Kidney (tissue), 22 donors: ENCODE measurements at regions of chr11 and their contacts with region 1.

Region 1: DNA sequence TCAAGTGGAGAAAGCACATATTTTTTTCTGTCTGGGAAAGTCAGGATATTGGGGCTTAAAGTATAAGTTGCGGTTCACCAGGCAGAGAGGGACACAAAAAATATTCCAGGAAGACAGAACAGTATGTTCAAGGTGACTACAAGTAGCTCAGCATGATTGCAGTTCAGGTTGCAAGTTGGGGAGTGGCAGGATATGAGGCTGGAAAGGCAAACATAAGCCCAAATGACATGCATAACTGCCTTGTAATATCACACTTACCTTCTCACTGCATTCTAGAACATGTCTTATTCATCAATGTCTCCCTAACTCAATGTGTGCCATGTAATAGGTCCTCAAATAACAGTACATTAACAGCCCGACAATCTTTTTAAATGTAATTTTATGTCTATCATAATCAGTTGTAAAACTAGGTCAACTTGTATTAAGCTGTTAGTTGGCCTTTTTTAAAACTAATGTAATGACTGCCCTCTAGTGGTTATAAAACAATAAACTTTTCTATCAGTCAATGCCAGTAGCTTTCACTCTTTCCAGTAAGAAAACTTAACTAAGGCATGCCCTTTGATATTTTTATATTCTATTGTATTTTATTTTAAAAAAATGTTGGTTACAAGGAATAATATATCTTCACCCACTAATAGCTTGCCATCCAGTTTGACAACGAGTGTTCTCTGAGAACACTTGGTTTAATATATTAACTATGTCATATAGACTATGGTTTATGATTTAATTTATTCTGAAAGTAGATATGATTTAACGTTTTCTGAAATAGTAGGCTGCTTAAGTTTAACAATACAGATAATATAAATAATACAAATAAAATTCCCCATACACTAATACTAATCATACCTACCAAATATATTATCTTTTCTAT is 39.4 kb upstream of the CFAP300 start:
- DNase-seq: peak in 3 of 5 donors; percentile 22 to 75 (median 66)
- H3K4me3 ChIP-seq: no peak overlapping the region
- H3K27ac ChIP-seq: no peak overlapping the region
- H3K4me1 ChIP-seq: peaks cover 0 to 4% (median 0%) of the 10 kb centered on the region in 3 donors
- H3K27me3 ChIP-seq: no peaks in the 10 kb centered on the region
- CTCF ChIP-seq: peak; percentile 46

Region 2: DNA sequence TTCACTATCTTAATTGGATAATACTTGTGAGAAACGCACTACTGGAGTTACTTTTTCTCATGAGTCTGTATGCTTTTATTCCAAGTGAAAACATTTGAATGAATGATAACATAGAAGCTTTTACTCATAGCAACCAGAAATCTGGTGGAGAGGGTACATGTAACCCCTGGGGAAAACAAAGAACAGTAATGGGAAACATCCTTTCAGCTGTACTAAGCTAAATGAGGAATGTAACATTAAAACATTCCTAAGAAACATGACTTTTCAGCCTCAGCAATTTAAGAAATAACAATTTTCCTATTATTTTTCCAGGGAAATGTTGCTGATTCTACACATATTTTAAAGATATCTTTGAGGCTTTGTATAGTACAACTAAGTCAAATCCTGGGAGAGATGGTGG is 190.2 kb before region 1 on chr11:
- intact Hi-C with region 1: no loop called
- DNase-seq: no peak
- H3K4me3 ChIP-seq: no peak overlapping the region
- H3K27ac ChIP-seq: peak overlapping the region in 1 of 2 donors; percentile 23
- H3K4me1 ChIP-seq: no peaks in the 10 kb centered on the region
- H3K27me3 ChIP-seq: no peaks in the 10 kb centered on the region
- CTCF ChIP-seq: no peak

Region 3: GRCh38 chr11:101860696-101861427 is 146.9 kb before region 1 on chr11:
- intact Hi-C with region 1: loop called (anchors 10 kb)
- DNase-seq: peak; percentile 19 to 62 (median 53)
- H3K4me3 ChIP-seq: no peak overlapping the region
- H3K27ac ChIP-seq: no peak overlapping the region
- H3K4me1 ChIP-seq: no peaks in the 10 kb centered on the region
- H3K27me3 ChIP-seq: no peaks in the 10 kb centered on the region
- CTCF ChIP-seq: peak; percentile 71

Region 4: DNA sequence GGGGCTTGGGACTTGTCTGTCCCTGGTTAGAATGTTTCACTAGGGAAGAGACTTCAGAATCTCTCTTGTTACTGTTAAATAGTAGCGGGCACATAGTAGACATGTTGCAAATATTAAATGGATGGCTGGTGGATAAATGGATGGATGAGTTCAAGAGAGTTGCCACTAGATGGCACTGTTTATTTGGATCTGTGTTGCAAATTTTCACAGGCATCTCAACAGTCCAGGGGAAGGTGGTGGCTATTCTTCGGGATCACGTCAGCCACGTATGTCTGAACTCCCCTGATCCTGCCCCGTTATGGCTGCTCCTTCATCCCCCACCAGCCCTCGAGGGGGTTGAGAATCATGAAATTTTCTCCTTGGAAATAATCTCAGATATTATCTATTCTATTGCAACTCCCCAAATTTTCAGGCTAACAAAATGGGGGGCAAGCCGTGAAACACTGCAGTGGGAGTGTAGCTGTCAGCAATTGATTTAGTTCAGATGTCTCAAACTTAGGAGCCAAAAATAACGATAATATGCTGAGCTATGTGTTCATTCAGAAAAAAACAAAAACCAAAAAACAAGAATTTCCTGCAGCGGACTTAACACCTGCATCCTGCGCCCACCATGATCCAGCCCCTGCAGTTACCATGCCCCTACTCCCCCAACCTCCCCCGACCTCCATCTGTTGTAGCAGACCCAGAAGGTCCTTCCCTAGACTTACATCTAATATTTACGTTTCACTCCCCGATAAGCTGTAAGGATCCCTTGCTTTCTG is 280.3 kb after region 1 on chr11:
- intact Hi-C with region 1: no loop called
- DNase-seq: peak in 4 of 5 donors; percentile 50 to 88 (median 67)
- H3K4me3 ChIP-seq: peak overlapping the region in 2 of 3 donors; percentile 47 to 57
- H3K27ac ChIP-seq: no peak overlapping the region
- H3K4me1 ChIP-seq: no peaks in the 10 kb centered on the region
- H3K27me3 ChIP-seq: no peaks in the 10 kb centered on the region
- CTCF ChIP-seq: peak; percentile 71